ENCODE measurements at regions of chr1 and their contacts with region 1.

Region 1: DNA sequence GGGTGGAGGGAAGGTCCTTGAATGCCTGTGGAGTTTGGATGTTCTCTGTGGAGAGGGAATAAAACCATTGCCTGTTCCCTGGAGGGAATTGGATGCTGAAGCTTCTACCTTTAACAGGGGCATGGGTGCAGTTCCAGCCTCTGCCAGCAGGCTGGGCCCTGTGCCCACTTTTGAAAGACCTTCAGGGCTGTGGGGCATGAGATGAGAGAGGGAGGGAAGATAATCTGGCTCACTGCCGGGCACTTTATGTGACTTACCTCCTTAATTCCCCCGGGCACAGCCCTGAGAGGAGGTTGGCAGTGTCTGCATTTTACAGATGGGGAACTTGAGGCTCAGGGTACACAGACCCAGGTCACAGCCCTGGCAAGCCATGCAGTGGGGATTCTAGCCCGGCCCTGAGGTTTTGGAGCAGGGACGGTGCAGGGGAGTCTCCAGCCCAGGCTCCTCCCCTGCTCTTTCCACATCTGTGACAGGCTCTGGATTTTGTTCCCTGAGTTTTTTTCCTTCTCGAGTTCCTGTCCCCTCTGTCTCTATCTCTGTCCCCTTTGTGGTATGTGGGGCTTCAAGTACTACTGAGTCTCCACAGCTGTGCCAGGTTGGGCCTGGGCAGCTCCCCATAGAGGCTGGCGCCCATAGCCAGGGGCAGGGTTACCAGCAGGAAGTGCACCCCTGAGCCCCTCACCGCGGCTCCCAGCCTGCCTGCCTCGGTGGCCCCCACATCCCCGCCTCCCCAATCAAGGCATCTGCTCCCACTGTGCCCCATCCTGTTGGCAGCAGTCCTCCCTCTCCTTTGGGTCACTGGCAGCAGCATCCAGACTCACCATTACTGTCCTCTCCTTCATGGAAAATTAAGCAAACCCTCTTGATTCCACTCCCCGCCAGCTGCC is 14.0 kb upstream of the THEMIS2 start:
- DNase-seq: peak; percentile 73
- H3K4me3 Mint-ChIP-seq: no peak overlapping the region
- H3K27ac Mint-ChIP-seq: no peak overlapping the region
- H3K4me1 Mint-ChIP-seq: peaks cover 9% of the 10 kb centered on the region
- H3K27me3 Mint-ChIP-seq: no peaks in the 10 kb centered on the region

Region 2: GRCh38 chr1:27912429-27912828 is 54.1 kb after region 1 on chr1:
- intact Hi-C with region 1: loop called (anchors 1 kb)
- DNase-seq: no peak
- H3K4me3 Mint-ChIP-seq: peak overlapping the region; percentile 54
- H3K27ac Mint-ChIP-seq: peak overlapping the region; percentile 89
- H3K4me1 Mint-ChIP-seq: peaks cover 22% of the 10 kb centered on the region
- H3K27me3 Mint-ChIP-seq: peaks cover 2% of the 10 kb centered on the region

Region 3: DNA sequence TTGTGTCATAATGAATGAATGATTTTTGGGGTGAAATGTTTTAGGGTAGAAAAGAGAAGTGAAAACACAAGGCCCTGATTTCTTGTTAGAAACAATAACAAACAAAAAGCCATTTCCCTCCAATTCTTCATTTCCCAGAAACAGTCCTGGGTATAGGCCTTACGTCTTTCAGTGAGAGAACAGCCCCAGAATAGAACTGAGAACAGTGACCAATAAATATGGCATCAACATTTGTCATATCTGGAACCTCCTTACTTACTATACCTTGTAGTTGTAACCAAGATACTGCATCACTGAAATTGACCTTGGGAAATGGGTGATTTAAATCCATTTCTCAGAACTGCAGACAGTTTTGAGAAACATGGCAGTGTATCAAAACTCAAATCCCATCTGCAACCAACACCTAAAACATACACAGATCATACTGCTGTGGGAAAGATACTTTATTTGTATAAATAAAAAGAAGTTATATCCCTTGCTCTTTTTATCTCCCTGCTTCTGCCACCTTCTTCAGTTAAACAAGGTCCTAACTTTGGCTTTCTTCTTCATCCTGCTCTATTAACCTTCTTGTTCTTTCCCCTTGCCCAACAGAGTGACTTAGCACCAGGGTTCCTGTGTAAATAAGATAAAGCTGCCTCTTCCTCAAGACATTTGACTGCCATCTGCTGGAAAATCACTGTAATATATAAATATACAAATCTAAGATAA is 121.0 kb after region 1 on chr1:
- intact Hi-C with region 1: loop called (anchors 1 kb)
- DNase-seq: no peak
- H3K4me3 Mint-ChIP-seq: no peak overlapping the region
- H3K27ac Mint-ChIP-seq: peak overlapping the region; percentile 55
- H3K4me1 Mint-ChIP-seq: peaks cover 2% of the 10 kb centered on the region
- H3K27me3 Mint-ChIP-seq: no peaks in the 10 kb centered on the region

Region 4: DNA sequence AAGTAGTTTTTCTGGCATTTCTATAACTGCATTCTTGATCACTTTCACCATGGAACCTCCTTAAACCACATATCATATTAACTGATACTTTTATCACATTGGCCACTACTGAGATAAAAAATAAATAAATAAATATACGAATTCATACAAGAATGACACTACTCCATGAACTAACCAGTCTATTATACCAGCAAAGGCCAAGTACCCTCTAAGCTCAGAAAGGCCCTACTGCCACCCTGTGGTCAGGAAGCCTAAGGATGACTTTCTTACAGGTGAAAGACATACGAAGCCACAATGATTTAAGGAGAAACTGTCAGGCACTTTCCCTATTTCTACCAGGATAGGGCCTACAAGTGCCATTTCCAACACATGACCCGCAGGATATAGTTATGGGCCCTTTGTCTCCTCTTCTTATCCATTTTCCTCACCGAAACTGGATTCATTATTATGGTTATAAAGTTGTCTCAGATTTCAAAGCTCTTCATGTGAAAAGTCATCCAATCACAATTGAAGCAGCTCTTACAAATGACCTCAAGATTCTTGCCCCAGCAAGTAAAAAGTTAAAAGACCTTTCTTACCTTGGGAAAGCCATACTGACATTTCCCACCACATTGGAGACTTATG is 350.6 kb after region 1 on chr1:
- intact Hi-C with region 1: loop called (anchors 10 kb)
- DNase-seq: peak; percentile 44
- H3K4me3 Mint-ChIP-seq: no peak overlapping the region
- H3K27ac Mint-ChIP-seq: no peak overlapping the region
- H3K4me1 Mint-ChIP-seq: peaks cover 14% of the 10 kb centered on the region
- H3K27me3 Mint-ChIP-seq: no peaks in the 10 kb centered on the region

Measured in activated T-helper 2 cell treated with anti-CD3 and anti-CD28 coated beads, Interferon-gamma antibody, Interleukin-2, Interleukin-4, amounts not matched to agents 10 μg/mL and 5 μg/mL and 100 μg/mL, durations not matched to agents 14 hours and 24 hours and 36 hours (primary cell).